ENCODE measurements at regions of chr20 and their contacts with region 1.

Region 1: GRCh38 chr20:36881888-36882287 is 6.0 kb downstream of the TLDC2 start:
- DNase-seq: no peak
- ATAC-seq: no peak
- H3K4me3 ChIP-seq: no peak overlapping the region
- H3K27ac ChIP-seq: no peak overlapping the region
- H3K4me1 ChIP-seq: peaks cover 0 to 4% (median 1%) of the 10 kb centered on the region in 9 donors
- H3K27me3 ChIP-seq: no peaks in the 10 kb centered on the region
- CTCF ChIP-seq: no peak

Region 2: DNA sequence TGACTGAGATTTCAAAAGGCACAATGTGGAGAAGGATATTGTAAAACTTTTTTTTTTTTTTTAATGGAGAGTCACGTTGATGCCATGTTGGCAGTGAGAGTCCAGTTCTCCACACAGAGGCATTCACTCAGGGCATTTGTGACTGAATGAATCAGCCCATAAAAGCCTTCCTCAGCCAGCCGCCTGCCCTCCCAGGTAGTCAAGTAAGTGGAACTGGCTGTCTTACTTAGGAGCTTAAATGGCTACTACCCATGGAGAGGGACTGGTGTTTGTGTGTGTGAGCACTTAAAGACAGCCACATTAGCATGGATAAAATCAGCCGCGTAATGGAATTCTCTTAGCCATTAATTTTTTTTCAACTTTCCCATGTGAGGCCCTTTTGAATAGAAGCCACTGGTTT is 633.1 kb before region 1 on chr20:
- intact Hi-C with region 1: no loop called
- DNase-seq: no peak
- ATAC-seq: no peak
- H3K4me3 ChIP-seq: no peak overlapping the region
- H3K27ac ChIP-seq: no peak overlapping the region
- H3K4me1 ChIP-seq: no peaks in the 10 kb centered on the region
- H3K27me3 ChIP-seq: no peaks in the 10 kb centered on the region
- CTCF ChIP-seq: no peak

Region 3: DNA sequence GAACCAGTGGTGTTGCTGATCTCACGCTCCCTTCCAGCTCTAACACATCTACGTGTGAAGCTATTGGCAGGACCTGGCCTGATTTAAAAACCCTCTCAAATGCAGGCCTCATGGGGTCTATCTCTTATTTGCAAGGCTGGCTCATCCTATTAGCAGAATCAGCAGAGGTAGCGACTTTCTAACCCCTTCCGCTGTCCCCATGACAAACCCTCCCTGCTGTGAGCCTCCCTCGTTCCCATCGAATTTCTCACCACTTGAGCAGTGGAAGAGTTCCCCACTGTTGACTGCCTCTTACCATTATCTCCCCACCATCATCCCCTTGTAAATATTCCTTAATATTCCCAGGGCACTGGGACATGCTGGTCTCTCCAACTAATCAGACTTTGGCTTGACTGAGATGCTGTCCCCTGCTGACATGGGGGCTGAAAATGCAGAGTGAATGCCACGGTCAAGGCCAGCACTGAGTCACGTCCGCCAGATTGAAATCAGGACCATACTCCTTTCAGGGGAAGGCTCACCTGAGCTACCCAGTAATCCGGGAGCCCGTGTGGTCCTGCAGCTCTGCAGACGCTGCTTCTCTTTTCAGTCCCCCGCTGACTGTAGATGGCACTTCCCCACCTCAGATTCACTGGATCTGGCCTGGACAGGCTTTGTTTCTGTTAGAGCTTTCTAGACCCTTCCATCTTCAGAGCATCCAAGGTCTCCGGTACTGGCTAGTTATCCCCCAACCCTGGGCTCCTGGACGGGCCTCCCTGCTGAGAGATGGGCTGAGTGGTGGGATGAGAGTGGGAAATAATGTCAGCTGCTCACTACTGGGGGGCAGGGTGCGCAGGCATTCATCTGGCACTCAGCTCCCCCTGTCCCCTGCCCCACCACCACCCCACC is 622.5 kb before region 1 on chr20:
- intact Hi-C with region 1: no loop called
- DNase-seq: no peak
- ATAC-seq: no peak
- H3K4me3 ChIP-seq: no peak overlapping the region
- H3K27ac ChIP-seq: no peak overlapping the region
- H3K4me1 ChIP-seq: no peaks in the 10 kb centered on the region
- H3K27me3 ChIP-seq: peaks cover 0 to 5% (median 0%) of the 10 kb centered on the region in 7 donors
- CTCF ChIP-seq: no peak

Region 4: DNA sequence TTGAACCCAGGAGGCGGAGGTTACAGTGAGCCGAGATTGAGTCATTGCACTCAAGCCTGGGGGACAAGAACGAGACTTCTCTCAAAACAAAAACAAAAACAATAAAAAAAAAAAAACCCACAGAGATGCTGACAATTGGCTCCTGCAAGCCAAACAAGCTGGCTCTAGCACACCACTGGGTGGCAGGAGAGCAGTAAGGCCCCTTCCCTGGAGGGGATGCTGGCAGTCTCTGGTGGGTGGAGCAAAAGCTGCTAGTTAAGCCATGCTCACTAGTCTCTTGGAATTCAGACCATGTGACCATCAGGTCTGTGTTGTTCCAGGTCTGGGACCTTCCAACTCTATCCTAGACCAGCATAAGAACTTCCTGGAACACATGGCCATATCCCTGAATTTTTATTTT is 89.5 kb before region 1 on chr20:
- intact Hi-C with region 1: loop called in 3 of 10 experiments (anchors 5 to 10 kb)
- DNase-seq: peak in 1 of 2 donors; percentile 45
- ATAC-seq: peak in 7 of 8 donors; percentile 30 to 83 (median 57)
- H3K4me3 ChIP-seq: no peak overlapping the region
- H3K27ac ChIP-seq: no peak overlapping the region
- H3K4me1 ChIP-seq: peaks cover 0 to 18% (median 5%) of the 10 kb centered on the region in 9 donors
- H3K27me3 ChIP-seq: no peaks in the 10 kb centered on the region
- CTCF ChIP-seq: peak in 8 of 9 donors; percentile 26 to 62 (median 46)

Region 5: GRCh38 chr20:36932476-36933426 is 50.9 kb after region 1 on chr20:
- intact Hi-C with region 1: no loop called
- DNase-seq: no peak
- ATAC-seq: no peak
- H3K4me3 ChIP-seq: no peak overlapping the region
- H3K27ac ChIP-seq: peak overlapping the region in 1 of 10 donors; percentile 5
- H3K4me1 ChIP-seq: peaks cover 0 to 61% (median 19%) of the 10 kb centered on the region in 9 donors
- H3K27me3 ChIP-seq: no peaks in the 10 kb centered on the region
- CTCF ChIP-seq: no peak